ENCODE measurements at regions of chr12 and their contacts with region 1.

Region 1: DNA sequence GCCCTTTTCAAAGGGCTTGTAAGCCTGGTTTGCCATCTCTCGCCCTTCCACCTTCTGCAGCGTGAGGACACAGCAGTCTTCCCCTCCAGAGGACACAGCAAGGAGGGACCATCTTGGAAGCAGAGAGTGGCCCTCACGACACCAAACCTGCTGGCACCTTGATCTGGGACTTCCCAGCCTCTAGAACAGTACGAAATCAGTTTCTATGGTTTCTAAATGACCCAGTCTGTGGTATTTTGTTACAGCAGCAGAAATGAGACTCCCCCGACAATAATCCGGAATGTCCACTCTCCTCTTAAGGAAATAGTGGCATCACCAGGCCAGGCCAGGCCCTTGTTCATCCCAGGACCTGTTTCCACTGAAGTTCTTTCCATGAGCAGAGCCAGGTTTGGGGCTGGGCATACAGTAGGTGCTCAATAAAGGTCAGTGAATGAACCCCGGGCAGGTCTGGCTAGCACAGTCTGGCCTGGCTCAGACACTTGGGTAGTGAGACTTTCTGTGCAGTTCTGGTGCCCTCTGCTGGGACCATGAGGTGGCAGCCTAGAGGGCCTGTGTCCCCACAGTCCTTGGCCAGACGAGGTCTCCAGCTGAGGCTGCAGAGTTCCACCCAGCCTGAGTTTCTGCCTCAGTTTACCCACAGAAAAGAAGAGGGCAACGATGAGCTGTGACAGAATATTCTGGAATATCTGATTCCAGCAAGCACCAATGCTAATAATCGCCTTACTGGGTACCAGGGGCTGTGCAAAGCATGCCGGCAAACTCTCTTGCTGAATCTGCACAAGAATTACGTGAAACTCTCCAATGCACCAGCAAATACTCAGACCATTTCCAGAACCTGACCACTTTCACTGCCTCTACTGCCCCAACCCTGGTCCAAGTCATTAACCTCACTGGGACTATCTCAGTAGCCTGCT is 14.0 kb downstream of the ABCB9 start:
- DNase-seq: peak; percentile 93
- H3K4me3 ChIP-seq: no peak overlapping the region
- H3K27ac ChIP-seq: no peak overlapping the region
- H3K4me1 ChIP-seq: peaks cover 0 to 31% (median 14%) of the 10 kb centered on the region in 6 donors
- H3K27me3 ChIP-seq: no peaks in the 10 kb centered on the region
- CTCF ChIP-seq: peak; percentile 85 to 97 (median 91)
- POLR2A ChIP-seq: no peak

Region 2: GRCh38 chr12:122526683-122527477 is 425.4 kb before region 1 on chr12 and contains the starts of genes KNTC1 and RSRC2:
- intact Hi-C with region 1: no loop called
- DNase-seq: peak; percentile 97
- H3K4me3 ChIP-seq: peak within 1 kb of the TSS; percentile 62 to 90 (median 74)
- H3K27ac ChIP-seq: peak within 1 kb of the TSS; percentile 96 to 100 (median 98)
- H3K4me1 ChIP-seq: peaks cover 33 to 59% (median 50%) of the 10 kb centered on the region in 6 donors
- H3K27me3 ChIP-seq: no peaks in the 10 kb centered on the region
- CTCF ChIP-seq: peak in 2 of 11 experiments; percentile 8 to 19
- POLR2A ChIP-seq: peak; percentile 90 to 96 (median 91)
- total RNA-seq, gene KNTC1: 22.7 to 46.1 (median 29.9) TPM
- total RNA-seq, gene RSRC2: 65.7 to 104 (median 88.1) TPM

Region 3: DNA sequence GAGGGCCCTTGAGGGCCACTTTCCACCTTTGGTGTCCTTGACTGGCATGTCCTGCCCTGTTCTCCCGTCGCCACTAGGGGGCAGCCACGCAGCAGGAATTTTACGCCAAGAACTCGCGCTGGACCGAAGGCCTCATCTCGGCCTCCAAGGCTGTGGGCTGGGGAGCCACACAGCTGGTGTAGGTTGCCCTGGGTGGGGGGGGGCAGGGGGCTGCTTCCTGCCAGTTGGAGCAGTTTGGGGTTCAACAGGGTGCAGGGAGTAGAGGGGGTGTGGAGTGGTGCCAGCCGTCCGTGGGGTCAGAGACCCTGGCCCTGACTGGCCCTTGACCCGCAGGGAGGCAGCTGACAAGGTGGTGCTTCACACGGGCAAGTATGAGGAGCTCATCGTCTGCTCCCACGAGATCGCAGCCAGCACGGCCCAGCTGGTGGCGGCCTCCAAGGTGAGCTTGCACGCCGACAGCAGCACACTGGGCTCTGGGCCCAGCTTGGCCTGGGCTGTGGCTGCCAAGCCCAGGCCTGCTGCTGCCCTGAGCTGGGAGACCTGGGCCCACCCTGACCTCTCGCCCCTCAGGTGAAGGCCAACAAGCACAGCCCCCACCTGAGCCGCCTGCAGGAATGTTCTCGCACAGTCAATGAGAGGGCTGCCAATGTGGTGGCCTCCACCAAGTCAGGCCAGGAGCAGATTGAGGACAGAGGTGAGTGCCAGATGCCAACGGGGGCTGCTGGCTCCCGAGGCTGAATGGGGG is 91.7 kb before region 1 on chr12:
- intact Hi-C with region 1: loop called (anchors 2 kb)
- DNase-seq: peak; percentile 96
- H3K4me3 ChIP-seq: no peak overlapping the region
- H3K27ac ChIP-seq: peak overlapping the region in 4 of 8 donors; percentile 29 to 74 (median 46)
- H3K4me1 ChIP-seq: peaks cover 16 to 57% (median 36%) of the 10 kb centered on the region in 6 donors
- H3K27me3 ChIP-seq: no peaks in the 10 kb centered on the region
- CTCF ChIP-seq: peak; percentile 87 to 97 (median 94)
- POLR2A ChIP-seq: no peak

Region 4: GRCh38 chr12:123813349-123813748 is 861.1 kb after region 1 on chr12:
- intact Hi-C with region 1: no loop called
- DNase-seq: no peak
- H3K4me3 ChIP-seq: no peak overlapping the region
- H3K27ac ChIP-seq: no peak overlapping the region
- H3K4me1 ChIP-seq: no peaks in the 10 kb centered on the region
- H3K27me3 ChIP-seq: peaks cover 0 to 6% (median 0%) of the 10 kb centered on the region in 7 donors
- CTCF ChIP-seq: no peak
- POLR2A ChIP-seq: no peak

Measured in spleen (tissue), 13 donors.